Dendritic cell treated with granulocyte-macrophage colony-stimulating factor and Interleukin-4, amounts not matched to agents 40 ng/mL and 50 ng/mL, for 4 days (primary cell): ENCODE measurements at regions of chr4 and their contacts with region 1.

Region 1: GRCh38 chr4:114694770-114695169 is 96.2 kb downstream of the UGT8 start:
- H3K4me3 Mint-ChIP-seq: no peak overlapping the region
- H3K27ac Mint-ChIP-seq: no peak overlapping the region
- H3K4me1 Mint-ChIP-seq: no peaks in the 10 kb centered on the region
- H3K27me3 Mint-ChIP-seq: no peaks in the 10 kb centered on the region

Region 2: DNA sequence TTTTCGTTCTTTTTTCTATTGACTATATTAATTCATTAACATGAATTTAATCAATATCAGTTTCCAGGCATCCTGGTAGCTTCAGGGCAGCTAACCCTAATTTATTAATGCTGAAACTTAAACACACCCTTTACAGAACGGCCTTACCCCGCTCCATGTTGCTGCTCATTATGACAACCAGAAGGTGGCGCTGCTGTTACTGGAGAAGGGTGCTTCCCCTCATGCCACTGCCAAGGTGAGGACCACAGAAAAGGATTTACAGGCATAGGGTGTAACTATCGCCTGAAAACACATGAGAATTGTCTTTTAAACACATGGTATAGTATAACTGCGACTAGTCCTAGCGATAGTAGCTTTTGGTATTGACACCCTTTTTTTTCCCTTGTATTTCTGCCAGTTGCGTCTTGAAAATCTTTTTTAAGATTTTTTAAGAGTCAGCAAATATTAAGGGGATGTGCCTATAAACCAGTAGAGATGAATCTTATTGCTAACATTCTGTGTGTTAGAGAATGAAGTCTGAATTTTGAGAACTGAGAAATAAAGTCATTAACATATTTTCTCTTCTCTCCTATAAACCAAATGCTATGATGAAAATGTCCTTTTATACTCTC is 1416.3 kb before region 1 on chr4:
- intact Hi-C with region 1: loop called (anchors 2 kb)
- H3K4me3 Mint-ChIP-seq: no peak overlapping the region
- H3K27ac Mint-ChIP-seq: no peak overlapping the region
- H3K4me1 Mint-ChIP-seq: no peaks in the 10 kb centered on the region
- H3K27me3 Mint-ChIP-seq: no peaks in the 10 kb centered on the region

Region 3: DNA sequence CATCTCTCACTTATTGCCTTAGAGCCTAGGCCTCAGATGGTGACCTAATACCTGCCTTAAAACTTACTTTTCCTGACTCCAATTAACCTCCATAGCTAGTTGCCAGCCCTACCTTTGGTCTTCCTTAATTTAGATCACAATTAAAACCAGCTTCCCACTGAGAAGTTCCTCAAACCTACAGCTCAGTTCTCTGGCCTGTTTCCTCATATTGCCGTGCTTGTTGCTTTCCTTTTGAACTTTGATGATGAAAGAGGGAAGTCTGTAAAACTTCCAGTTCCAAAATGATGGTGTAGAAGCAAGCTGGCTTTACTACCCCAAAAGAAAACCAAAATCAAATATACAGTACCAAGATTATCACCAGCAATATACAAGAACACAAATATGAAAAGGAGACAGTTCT is 904.3 kb before region 1 on chr4:
- intact Hi-C with region 1: no loop called
- H3K4me3 Mint-ChIP-seq: no peak overlapping the region
- H3K27ac Mint-ChIP-seq: no peak overlapping the region
- H3K4me1 Mint-ChIP-seq: peaks cover 12% of the 10 kb centered on the region
- H3K27me3 Mint-ChIP-seq: no peaks in the 10 kb centered on the region

Region 4: GRCh38 chr4:114386637-114387233 is 308.0 kb before region 1 on chr4:
- intact Hi-C with region 1: loop called (anchors 2 kb)
- H3K4me3 Mint-ChIP-seq: no peak overlapping the region
- H3K27ac Mint-ChIP-seq: no peak overlapping the region
- H3K4me1 Mint-ChIP-seq: no peaks in the 10 kb centered on the region
- H3K27me3 Mint-ChIP-seq: no peaks in the 10 kb centered on the region